H1 (cell line): ENCODE measurements at regions of chr2 and their contacts with region 1.

Region 1: DNA sequence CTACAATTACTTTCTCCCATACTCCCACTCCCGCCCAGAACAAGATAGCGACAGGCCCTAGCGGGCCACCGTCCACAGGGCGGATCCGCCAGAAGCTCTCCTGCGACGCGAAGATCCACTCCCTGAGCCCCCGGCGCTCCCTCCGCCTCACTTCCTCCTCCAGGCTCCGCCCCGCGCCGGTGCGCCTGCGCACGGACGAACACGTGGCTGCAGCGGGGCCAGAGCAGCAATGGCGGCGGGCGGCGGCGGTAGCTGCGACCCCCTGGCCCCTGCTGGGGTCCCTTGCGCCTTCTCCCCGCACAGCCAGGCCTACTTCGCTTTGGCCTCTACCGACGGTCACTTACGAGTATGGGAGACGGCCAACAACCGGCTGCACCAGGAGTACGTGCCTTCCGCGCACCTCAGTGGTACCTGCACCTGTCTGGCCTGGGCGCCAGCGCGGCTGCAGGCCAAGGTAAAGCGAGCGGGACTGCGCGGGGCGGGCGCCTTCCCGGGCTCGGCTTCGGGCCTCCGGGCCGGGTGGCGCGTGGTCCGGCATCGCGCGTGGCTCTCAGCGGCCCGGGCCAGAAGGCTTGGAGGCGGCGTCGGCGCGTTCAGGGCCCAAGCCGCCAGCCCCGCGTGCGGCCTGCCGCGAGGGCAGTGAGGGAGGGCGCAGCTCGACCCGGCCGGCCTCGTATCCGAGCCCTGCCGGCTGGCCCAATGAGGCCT is at the start of gene WDR43:
- DNase-seq: peak; percentile 96 to 97
- H3K4me3 ChIP-seq: peak within 1 kb of the TSS; percentile 94 to 99 (median 96)
- H3K27ac ChIP-seq: peak within 1 kb of the TSS; percentile 97
- H3K4me1 ChIP-seq: peaks cover 0 to 3% (median 3%) of the 10 kb centered on the region in 4 experiments; a peak in 4 of 7 replicates
- H3K27me3 ChIP-seq: no peaks in the 10 kb centered on the region; a peak in 1 of 7 replicates
- CTCF ChIP-seq: no peak; a peak in 1 of 4 replicates
- EP300 ChIP-seq: peak in 1 of 2 experiments; percentile 30; a peak in 1 of 3 replicates
- POLR2A ChIP-seq: peak in 1 of 2 experiments; percentile 90; a peak in 2 of 3 replicates
- RAD21 ChIP-seq: no peak
- total RNA-seq, gene WDR43: 135 and 142 TPM in 2 replicates

Region 2: DNA sequence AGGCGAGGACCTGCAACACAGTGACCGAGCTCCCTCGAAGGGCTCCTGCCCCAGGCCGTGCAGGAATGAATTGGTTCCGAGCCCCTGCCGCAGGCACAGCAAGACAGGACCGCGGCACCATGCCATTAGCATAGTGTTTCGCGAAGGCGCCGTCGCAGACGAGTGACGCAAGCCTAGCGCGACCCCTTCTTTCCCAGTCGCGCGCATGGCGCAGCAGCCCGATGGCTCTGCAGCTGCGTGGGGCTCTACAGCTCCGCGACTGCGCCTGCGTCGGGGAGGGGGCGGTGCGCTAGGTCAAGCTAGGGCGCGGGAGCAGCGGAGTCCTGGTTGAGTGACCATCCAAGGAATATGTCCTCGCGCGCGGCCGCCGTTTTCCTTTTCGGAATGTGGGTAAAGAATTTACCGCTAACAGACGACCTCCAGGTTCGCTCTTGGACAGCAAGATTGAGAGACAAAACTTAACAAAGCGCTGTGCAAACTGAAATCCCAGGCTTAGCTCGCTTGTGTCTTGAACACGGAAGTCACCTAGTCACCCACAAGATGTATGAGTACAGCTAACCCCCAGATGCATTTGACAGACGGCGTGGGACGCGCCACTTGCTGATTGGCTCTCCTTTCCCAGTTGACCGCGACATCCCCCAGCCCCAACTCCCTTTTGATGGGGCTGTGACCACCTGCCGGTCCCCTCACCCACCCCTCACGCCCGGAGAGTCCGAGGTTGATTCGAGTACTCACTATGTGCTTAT is 24.3 kb before region 1 on chr2 and contains the start of gene TRMT61B:
- CTCF ChIA-PET with region 1: interaction called, 9 read pairs
- POLR2A ChIA-PET with region 1: interaction called, 63 read pairs
- DNase-seq: peak; percentile 88 to 99
- H3K4me3 ChIP-seq: peak within 1 kb of the TSS; percentile 75 to 87 (median 84)
- H3K27ac ChIP-seq: peak within 1 kb of the TSS; percentile 76
- H3K4me1 ChIP-seq: no peaks in the 10 kb centered on the region; a peak in 1 of 7 replicates
- H3K27me3 ChIP-seq: no peaks in the 10 kb centered on the region
- CTCF ChIP-seq: no peak
- EP300 ChIP-seq: 0 out of 3 replicates have a peak, but pooled peaks of 1 of the 2 experiments have one; percentile 72
- POLR2A ChIP-seq: peak; percentile 96
- RAD21 ChIP-seq: no peak
- total RNA-seq, gene TRMT61B: 27.8 and 30.1 TPM in 2 replicates

Region 3: GRCh38 chr2:28880193-28880592 is 14.4 kb before region 1 on chr2:
- CTCF ChIA-PET with region 1: no interaction called
- POLR2A ChIA-PET with region 1: interaction called, 10 read pairs
- DNase-seq: no peak
- H3K4me3 ChIP-seq: no peak overlapping the region
- H3K27ac ChIP-seq: no peak overlapping the region
- H3K4me1 ChIP-seq: no peaks in the 10 kb centered on the region
- H3K27me3 ChIP-seq: no peaks in the 10 kb centered on the region; a peak in 1 of 7 replicates
- CTCF ChIP-seq: no peak
- EP300 ChIP-seq: no peak
- POLR2A ChIP-seq: no peak
- RAD21 ChIP-seq: no peak

Region 4: DNA sequence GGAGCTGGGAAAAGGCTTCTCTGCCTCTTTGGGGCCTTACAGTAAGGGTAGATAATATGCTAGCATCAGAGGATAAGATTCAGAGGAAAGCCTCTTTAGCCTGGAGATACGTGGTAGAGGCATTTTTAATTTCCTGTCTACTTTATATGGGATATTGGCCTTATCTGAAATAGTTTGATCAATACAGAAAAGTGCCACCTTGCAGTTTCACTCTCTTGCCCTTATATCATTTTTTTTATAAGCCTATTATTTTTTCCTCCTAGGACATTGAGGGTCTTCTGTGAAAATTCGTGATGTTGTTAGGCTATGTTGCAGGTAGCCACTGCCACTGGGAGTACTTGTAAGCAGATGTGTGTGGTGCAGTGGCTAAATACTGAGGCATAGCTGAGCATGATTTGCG is 46.4 kb after region 1 on chr2:
- CTCF ChIA-PET with region 1: no interaction called
- POLR2A ChIA-PET with region 1: interaction called, 11 read pairs
- DNase-seq: no peak
- H3K4me3 ChIP-seq: no peak overlapping the region
- H3K27ac ChIP-seq: no peak overlapping the region
- H3K4me1 ChIP-seq: no peaks in the 10 kb centered on the region
- H3K27me3 ChIP-seq: no peaks in the 10 kb centered on the region
- CTCF ChIP-seq: no peak
- EP300 ChIP-seq: no peak
- POLR2A ChIP-seq: no peak
- RAD21 ChIP-seq: no peak